ENCODE measurements at regions of chr6 and their contacts with region 1.

Region 1: DNA sequence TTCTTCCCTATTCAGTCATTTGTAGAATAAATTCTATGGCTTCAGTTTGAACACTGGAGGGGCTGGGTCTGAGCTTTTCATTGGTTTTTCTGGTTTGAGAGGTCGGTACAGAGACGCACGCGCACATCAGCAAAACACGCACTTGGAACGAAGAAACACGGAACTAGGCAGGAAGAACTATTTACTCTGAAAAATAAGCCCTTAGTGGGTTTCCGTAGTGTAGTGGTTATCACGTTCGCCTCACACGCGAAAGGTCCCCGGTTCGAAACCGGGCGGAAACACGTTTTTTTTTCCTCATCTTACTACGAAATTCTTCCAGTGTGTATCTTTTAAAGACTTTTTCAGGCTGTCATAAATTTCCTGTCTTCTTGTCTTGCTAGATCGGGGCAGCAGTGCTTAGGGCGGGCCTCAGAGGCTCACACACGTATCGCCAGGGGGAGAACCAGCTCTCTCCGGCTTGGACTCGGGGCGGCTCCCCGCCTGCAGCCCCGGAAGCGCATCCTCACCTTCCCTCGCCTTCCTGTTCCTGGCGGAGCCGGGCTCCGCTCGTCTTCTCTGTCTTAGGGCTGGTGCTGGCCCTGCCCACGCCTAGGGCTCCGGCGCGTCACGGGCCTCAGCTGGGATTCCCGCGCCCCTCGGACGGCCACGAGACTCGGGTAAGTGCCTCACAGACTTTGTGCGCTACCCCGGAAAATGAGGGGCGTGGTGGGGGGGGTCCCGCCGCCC is at the start of gene HMGN4:
- DNase-seq: peak; percentile 72

Region 2: DNA sequence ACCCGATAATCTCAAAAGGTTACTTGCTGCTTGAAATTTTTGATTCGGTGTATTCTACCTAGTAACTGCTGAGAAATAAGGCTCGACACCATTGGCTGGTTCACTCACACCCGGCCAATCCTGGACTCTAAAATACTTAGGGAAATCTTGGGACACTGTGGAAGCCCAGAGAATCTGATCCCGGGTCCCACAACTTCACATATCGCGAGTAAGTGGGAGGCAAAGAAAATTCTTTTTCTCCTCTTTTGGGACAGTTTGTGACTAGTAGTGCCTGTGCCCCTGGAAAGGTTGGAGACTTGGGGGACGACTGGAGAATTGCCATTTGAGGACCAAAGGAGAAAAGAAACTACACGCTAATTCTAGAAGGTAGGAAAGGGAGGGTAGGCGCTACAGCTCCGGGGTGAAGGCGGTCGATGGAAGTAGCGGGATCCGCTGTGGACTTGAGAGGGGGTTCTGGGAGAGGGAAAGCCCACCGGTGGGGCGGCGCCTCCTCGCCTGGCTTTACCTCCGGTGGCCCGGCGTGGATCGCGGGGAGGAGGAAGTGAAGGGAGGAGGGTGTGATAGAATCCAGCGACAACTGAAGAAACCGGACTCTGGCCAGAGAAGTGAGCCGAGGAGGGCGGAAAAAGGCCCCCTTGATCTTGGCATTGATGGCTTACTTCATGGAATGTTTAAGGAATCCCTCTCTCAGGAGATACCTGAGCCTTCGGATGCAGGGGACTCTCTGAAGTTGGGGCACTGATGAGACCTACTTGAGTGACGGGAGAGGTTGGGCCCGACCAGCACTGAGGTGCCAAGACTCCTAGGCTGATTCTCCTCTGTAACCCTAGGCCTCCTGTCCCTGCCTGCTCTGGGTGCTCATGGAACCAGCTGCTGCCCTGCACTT is 116.5 kb before region 1 on chr6:
- CTCF ChIA-PET with region 1: no interaction called
- POLR2A ChIA-PET with region 1: no interaction called
- DNase-seq: peak; percentile 84

Region 3: GRCh38 chr6:26445934-26446667 is 91.9 kb before region 1 on chr6:
- CTCF ChIA-PET with region 1: no interaction called
- POLR2A ChIA-PET with region 1: no interaction called
- DNase-seq: no peak

Region 4: DNA sequence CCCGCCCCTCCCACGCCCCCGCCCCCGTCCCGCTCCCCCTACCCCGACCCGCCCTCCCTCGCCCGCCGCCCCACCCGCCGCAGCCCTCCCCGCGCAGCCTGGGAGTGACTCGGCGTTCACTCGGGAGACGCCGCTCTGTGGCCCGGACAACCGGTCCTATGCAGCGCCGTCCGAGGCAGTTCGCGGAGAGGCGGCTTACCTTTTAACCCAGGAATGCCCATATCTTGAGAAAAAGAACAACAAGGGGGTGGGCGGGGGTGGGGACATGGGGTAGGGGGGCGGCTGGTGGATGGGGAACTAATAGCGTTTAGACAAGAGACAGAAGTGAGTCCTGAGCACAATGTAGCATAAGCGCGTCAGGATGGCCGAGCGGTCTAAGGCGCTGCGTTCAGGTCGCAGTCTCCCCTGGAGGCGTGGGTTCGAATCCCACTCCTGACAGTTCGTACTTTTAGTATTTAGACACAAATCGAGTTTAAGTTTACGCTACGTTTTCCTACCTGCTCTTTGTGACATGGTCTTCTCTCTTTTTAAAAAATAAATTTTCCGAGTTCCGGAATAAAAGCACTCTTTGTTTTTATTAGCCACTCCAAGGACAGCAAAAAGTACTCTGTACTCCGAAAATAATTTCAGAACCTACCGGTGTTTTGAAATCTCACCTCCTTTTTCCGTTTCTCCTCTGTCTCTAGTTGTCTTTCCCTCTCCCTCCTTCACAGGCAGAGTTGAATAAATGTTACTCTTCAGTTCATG is 17.0 kb before region 1 on chr6:
- CTCF ChIA-PET with region 1: interaction called, 4 read pairs
- POLR2A ChIA-PET with region 1: interaction called, 22 read pairs
- DNase-seq: peak; percentile 90

Region 5: DNA sequence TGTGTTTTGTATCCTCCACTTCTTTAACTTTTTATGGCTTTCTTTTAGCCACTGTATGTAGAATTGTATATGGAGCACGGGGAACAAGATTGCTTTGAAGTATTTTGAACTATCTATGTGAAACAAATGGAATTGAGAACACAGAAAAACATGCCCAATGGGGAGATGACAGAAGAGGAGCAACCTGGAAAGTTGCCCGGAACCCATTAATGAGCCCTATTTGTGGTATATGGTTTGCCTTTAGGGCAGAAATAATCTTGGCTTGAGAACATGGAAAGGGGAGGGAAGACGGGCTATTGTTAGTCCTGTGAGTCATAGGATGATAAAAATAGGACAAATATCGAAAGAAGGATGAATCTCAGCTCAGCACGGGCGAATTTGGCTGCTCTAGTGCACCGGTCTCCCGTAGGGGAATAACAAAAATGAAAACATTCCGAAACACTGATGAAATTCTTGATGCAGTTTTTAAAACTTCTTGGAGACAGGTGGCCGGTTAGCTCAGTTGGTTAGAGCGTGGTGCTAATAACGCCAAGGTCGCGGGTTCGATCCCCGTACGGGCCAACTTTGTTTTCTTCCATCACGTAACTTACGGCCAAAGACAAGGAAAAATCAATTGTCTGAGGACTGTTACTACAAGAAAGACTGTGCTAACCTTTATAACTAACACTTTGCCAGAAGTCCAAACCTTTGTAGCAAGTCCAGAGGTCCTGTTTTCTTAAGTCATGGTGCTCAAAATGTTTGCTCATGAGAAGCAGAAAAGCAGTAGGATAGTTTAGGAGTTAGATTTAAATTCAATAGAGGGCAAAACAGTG is 15.8 kb after region 1 on chr6:
- CTCF ChIA-PET with region 1: interaction called, 3 read pairs
- POLR2A ChIA-PET with region 1: interaction called, 45 read pairs
- DNase-seq: no peak